Heart right ventricle (tissue), 16 donors: ENCODE measurements at regions of chrX and their contacts with region 1.

Region 1: DNA sequence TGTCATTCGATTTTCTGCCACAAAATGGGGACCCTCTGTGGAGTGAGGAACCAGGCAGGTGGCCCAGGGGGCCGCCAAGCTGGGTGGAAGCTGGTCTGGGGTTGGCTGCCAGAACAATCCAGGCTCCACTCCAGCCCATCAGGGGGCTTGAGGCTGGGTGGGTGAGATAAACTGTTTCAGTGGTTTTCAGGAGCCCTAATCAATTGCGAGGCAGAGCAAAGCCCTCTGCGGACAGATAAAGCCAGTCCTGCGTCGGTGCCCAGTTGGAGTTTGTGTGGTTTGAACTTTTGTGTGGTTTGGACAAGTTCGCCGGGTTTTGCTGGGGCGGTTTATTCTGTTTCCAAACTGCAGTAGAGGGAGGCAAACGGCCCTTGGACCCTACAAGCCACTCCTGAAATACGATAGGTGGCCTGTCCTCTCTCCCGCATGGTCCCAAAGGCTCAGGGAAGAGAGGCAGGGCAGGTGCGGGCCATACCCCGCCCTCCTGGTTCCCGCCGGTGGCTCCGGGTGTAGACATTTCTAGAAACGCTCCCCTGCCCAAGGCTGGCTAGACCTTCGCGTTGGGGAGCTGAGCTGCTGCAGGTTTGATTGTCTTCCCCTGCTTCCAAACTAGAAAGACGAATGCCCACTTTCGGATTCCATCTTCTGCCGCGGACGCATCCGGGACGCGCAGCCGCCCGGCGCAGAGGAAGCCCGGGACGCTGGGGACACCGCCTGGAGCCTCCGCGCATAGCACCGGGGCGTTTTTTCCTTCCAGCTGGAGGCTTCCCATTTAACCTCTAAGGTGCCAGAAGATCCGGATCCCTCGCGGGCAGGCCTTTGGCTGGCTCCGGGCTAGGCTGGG is 169.0 kb upstream of the BCOR start:
- DNase-seq: peak; percentile 64 to 70
- ATAC-seq: peak; percentile 85 to 95 (median 92)
- H3K4me3 ChIP-seq: peak overlapping the region; percentile 25 to 61 (median 52)
- H3K27ac ChIP-seq: peak overlapping the region in 9 of 10 donors; percentile 65 to 83 (median 77)
- H3K4me1 ChIP-seq: peaks cover 0 to 39% (median 8%) of the 10 kb centered on the region in 9 donors
- H3K27me3 ChIP-seq: peaks cover 0 to 32% (median 0%) of the 10 kb centered on the region in 7 donors
- CTCF ChIP-seq: peak; percentile 38 to 81 (median 63)

Region 2: GRCh38 chrX:39820938-39821708 is 445.6 kb before region 1 on chrX:
- intact Hi-C with region 1: loop called in 4 of 10 experiments (anchors 2 to 10 kb)
- DNase-seq: peak in 1 of 2 donors; percentile 19
- ATAC-seq: peak in 7 of 8 donors; percentile 40 to 83 (median 43)
- H3K4me3 ChIP-seq: peak overlapping the region; percentile 3 to 54 (median 44)
- H3K27ac ChIP-seq: peak overlapping the region in 2 of 10 donors; percentile 25 to 40
- H3K4me1 ChIP-seq: peaks cover 0 to 15% (median 9%) of the 10 kb centered on the region in 9 donors
- H3K27me3 ChIP-seq: peaks cover 0 to 84% (median 0%) of the 10 kb centered on the region in 7 donors
- CTCF ChIP-seq: peak in 1 of 9 donors; percentile 8

Region 3: DNA sequence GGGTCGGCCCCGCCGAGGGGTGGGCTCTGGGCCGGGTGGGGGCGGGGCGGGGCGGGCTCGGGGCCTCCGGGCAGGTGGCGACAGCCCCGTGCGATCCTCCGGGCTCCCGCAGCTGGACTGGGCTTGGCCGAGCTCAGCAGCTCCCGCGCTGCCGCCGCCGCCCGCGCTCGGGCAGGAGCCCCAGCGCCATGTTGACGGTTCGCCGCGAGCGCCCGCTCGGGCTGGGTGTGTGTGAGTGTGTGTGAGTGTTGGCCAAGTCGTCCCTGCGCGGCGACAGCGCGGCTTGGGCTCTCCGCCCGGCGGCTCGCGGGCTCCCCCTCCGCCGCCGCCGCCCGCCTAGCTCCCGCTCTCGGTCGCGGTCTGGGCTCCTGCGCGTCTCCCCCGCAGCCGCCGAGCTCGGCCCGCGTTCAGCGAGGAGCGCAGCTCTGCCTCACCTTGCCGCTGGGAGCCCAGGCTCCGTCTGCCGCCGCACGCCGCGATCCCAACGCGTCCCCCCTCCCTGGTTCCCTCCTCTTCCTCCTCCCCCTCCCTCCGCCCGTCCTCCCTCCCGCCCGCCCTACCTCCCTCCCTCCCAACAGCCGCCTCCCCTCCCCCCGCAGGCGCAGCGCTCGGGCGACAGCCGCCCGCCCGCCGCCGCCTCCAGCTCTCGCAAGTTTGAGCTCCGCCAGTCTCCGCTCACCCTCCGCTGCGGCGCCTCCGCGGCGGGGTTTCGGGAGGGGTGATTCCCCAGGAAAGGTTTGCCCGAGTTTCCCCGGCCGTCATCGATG is 169.0 kb before region 1 on chrX and contains the start of gene BCOR:
- intact Hi-C with region 1: loop called in 6 of 10 experiments (anchors 5 to 10 kb)
- DNase-seq: peak; percentile 72 to 80
- ATAC-seq: peak; percentile 26 to 63 (median 56)
- H3K4me3 ChIP-seq: peak within 1 kb of the TSS; percentile 70 to 88 (median 82)
- H3K27ac ChIP-seq: peak within 1 kb of the TSS; percentile 84 to 94 (median 92)
- H3K4me1 ChIP-seq: peaks cover 0 to 40% (median 17%) of the 10 kb centered on the region in 9 donors
- H3K27me3 ChIP-seq: peaks cover 0 to 99% (median 0%) of the 10 kb centered on the region in 7 donors
- CTCF ChIP-seq: peak in 1 of 9 donors; percentile 20
- total RNA-seq, gene BCOR: 12.4 to 27.2 (median 19.9) TPM

Region 4: DNA sequence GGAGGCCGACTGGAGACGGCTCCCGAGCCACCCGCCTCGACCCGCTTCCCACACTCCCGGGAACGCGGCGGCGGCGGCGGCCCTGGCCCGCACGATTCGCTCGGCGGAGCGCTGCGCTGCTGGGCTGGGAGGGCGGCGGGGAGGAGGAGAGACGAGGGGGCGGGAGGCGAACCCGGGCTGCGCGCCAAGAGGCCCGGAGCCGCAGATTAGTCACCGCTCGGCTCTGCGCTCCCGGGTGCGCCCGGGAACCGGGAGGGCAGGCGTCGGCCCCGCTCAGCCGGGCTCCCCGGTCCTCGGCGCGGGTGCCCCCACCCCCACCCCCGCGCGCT is 157.8 kb before region 1 on chrX:
- intact Hi-C with region 1: loop called in 1 of 10 experiments (anchors 10 kb)
- DNase-seq: peak; percentile 74 to 84
- ATAC-seq: peak; percentile 60 to 82 (median 68)
- H3K4me3 ChIP-seq: peak overlapping the region; percentile 28 to 75 (median 59)
- H3K27ac ChIP-seq: peak overlapping the region; percentile 84 to 96 (median 93)
- H3K4me1 ChIP-seq: peaks cover 2 to 44% (median 34%) of the 10 kb centered on the region in 9 donors
- H3K27me3 ChIP-seq: peaks cover 0 to 73% (median 0%) of the 10 kb centered on the region in 7 donors
- CTCF ChIP-seq: no peak

Region 5: DNA sequence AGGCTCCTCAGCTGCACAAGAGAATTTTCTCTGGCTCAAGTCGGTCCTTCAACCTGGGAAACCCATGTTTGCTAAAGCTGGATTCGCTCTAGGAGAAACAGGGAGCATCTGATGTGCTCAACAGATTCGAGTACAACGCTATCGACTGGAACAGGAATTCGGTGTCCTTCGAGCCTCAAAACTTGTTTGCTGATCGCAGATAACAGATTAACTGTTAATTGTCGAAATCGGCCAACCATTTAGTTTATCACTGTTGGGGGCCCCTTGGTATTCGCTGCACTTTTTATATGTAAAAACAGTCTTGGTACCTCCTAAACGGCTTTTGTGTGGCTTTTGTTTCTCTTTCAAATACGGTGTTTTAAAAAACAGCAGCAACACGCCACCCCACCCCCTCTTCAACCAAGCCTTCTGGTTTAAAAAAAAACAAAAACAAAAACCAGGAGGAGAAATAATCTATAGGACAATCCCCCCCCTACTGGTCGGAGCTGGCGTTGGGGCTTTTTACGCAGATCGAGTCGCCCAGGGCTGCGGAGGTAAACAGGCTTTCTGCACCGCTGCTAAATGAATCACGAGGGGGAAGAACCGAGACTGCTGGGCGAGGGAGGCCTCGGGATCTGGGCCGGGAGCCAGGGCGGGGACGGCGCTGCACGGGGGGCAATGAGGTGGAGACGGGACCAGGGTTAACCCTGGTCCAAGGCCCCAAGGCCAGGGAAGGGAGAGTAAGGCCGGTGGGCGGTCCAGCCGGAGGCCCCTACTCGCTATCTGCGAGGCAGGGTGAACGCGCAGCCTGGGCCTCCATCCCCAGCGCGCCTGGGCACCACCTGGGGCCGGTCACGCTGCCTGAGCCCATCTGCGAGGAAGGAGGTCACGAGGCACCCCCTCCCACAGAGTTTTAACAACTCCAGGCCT is 97.3 kb before region 1 on chrX:
- intact Hi-C with region 1: loop called in 3 of 10 experiments (anchors 2 to 5 kb)
- DNase-seq: no peak
- ATAC-seq: no peak
- H3K4me3 ChIP-seq: peak overlapping the region in 2 of 10 donors; percentile 8 to 19
- H3K27ac ChIP-seq: peak overlapping the region in 1 of 10 donors; percentile 93
- H3K4me1 ChIP-seq: peaks cover 0 to 71% (median 35%) of the 10 kb centered on the region in 9 donors
- H3K27me3 ChIP-seq: peaks cover 0 to 97% (median 0%) of the 10 kb centered on the region in 7 donors
- CTCF ChIP-seq: peak in 5 of 9 donors; percentile 13 to 47 (median 18)

Region 6: DNA sequence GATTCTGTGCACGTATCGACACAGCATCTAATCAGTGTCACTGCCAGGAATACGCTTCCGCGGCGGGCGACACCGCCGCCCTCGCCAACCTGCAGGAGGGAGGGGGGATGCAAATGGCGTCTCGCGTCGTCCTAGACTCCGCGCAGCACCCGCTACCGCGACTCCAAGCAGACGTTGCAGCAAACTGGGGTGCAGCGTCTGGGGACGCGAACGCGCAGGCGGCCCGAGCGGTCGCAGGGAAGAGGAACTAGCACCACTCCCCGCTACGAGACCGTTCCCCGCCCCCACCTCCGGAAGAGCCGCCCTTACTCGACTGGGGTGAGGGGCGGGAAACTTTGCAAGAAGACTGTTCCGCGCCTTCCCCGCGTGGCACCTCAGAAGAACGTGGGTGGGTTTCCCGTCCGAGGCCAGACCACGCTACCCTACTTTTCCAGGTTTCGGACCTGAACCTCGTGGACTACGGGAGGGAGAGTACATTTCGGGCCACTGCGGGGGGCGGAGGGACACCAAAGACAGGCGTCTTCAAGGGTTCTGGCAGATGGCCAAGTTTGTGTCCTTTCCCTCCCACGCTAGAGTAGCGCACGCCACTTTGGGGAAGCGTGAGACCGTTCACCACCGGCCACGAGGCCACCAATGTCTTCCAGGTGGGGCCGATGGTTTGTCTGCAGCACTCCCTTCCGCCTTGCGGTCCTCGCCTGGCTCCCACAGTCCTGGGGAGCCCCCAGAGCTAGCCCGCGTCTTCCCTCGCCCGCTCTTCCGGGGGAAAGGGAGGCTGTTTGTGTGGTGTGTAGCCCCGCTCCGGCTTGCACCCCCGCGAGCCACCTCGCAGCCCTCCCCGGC is 91.0 kb before region 1 on chrX:
- intact Hi-C with region 1: loop called in 6 of 10 experiments (anchors 2 to 5 kb)
- DNase-seq: peak; percentile 75 to 77
- ATAC-seq: peak; percentile 48 to 75 (median 59)
- H3K4me3 ChIP-seq: peak overlapping the region; percentile 47 to 70 (median 63)
- H3K27ac ChIP-seq: peak overlapping the region; percentile 90 to 99 (median 98)
- H3K4me1 ChIP-seq: peaks cover 0 to 60% (median 22%) of the 10 kb centered on the region in 9 donors
- H3K27me3 ChIP-seq: peaks cover 0 to 82% (median 0%) of the 10 kb centered on the region in 7 donors
- CTCF ChIP-seq: no peak

Region 7: GRCh38 chrX:40366661-40367060 is 99.9 kb after region 1 on chrX:
- intact Hi-C with region 1: no loop called
- DNase-seq: no peak
- ATAC-seq: no peak
- H3K4me3 ChIP-seq: no peak overlapping the region
- H3K27ac ChIP-seq: no peak overlapping the region
- H3K4me1 ChIP-seq: no peaks in the 10 kb centered on the region
- H3K27me3 ChIP-seq: peaks cover 0 to 9% (median 0%) of the 10 kb centered on the region in 7 donors
- CTCF ChIP-seq: no peak